Dorsolateral prefrontal cortex (tissue), 120 donors: ENCODE measurements at regions of chr4 and their contacts with region 1.

Region 1: DNA sequence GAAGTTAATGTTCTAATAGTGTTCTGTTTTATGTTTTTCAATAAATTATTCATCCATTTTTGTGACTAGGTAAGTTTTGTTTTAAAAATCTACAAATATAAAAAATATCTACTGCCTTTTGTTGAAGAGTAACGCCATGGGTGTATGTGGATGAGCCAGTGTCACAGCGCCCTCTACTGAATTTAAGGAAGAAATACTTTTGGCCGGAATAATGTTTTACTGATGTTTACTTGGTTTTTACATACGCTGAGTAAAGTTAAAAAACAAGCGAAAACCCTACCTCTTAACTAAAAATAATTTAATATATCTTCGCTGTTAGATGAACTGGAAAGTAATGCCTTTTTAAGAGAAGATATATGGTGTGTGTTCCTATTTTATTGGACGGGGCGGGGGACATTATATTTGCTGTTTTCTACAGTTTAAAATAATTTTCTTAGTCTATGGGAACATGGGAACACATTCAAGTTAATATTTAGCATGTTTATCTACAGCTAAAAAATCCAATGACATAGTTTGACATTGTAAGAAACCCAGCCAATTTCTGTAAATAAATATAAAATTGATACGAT is 86.1 kb downstream of the CPE start:
- DNase-seq: no peak
- H3K4me3 ChIP-seq: peak overlapping the region in 2 of 59 donors; percentile 0 to 4
- H3K27ac ChIP-seq: peak overlapping the region in 16 of 59 donors; percentile 0 to 75 (median 55)
- H3K27me3 ChIP-seq: no peaks in the 10 kb centered on the region
- CTCF ChIP-seq: peak; percentile 67 to 96 (median 85)

Region 2: DNA sequence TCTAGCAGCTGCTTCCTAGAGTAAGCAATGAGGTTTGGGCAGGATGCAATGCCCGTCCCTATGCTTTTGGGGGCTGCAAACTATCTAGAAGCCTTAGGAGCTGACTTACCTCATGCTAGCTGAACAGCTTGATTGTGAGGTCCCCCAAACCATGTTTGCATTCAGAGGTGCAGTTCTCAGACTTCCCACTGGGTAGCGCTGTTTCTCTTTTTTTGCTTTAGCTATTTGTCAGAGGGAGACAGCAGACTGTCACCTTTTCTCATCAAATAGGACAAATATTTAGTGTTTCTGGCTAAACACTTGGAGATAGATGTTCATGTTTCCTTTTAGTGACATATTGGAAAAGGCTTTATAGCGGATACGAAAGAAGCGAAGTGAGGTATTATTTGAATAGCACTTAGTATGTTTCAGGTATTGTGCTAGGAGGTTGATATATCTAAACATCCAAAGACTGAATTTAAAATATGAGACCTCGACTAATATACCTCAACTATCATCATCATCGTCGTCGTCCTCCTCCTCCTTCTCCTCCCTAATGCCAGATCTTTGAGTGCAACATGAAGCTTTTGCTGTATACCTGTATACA is 333.6 kb before region 1 on chr4:
- intact Hi-C with region 1: loop called (anchors 1 to 2 kb)
- DNase-seq: peak in 7 of 10 donors; percentile 53 to 82 (median 66)
- H3K4me3 ChIP-seq: peak overlapping the region in 26 of 59 donors; percentile 6 to 41 (median 23)
- H3K27ac ChIP-seq: peak overlapping the region in 14 of 59 donors; percentile 2 to 60 (median 34)
- H3K27me3 ChIP-seq: no peaks in the 10 kb centered on the region
- CTCF ChIP-seq: peak; percentile 78 to 100 (median 94)

Region 3: GRCh38 chr4:165355900-165356300 is 109.0 kb before region 1 on chr4:
- intact Hi-C with region 1: loop called (anchors 5 kb)
- DNase-seq: peak in 5 of 10 donors; percentile 51 to 64 (median 55)
- H3K4me3 ChIP-seq: no peak overlapping the region
- H3K27ac ChIP-seq: no peak overlapping the region
- H3K27me3 ChIP-seq: no peaks in the 10 kb centered on the region
- CTCF ChIP-seq: peak in 53 of 56 donors; percentile 19 to 80 (median 53)

Region 4: GRCh38 chr4:165621983-165622382 is 157.1 kb after region 1 on chr4:
- intact Hi-C with region 1: no loop called
- DNase-seq: no peak
- H3K4me3 ChIP-seq: no peak overlapping the region
- H3K27ac ChIP-seq: no peak overlapping the region
- H3K27me3 ChIP-seq: peaks cover 0 to 3% (median 0%) of the 10 kb centered on the region in 45 donors
- CTCF ChIP-seq: no peak